T-cell (primary cell): ENCODE measurements at regions of chr5 and their contacts with region 1.

Region 1: GRCh38 chr5:78190402-78190801 is 104.1 kb downstream of the AP3B1 start:
- DNase-seq: no peak
- ATAC-seq: no peak
- H3K4me3 ChIP-seq: no peak overlapping the region
- H3K4me3 Mint-ChIP-seq: no peak overlapping the region
- H3K27ac ChIP-seq: no peak overlapping the region
- H3K27ac Mint-ChIP-seq: no peak overlapping the region
- H3K4me1 ChIP-seq: no peaks in the 10 kb centered on the region
- H3K4me1 Mint-ChIP-seq: peaks cover 8 to 12% (median 8%) of the 10 kb centered on the region in 3 donors
- H3K27me3 ChIP-seq: no peaks in the 10 kb centered on the region
- H3K27me3 Mint-ChIP-seq: no peaks in the 10 kb centered on the region

Region 2: DNA sequence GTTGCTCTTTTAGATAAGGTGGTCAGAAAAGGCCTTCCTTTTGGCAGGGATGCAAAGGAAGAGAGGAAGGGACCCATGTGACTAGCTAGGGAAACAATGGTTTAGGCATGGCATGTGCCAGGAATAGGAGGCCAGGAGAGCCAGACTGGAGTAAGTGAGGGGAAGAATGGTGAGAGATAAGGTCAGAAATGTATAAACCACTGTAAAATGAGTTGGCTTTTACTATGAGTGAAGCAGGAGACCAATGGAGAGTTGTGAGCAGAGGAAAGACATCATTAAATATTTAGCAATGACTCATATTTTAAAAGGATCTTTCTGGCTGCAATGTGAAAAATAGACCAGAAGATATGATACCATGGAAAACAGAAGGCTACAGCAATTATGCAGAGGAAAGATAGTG is 53.2 kb after region 1 on chr5:
- CTCF ChIA-PET with region 1: no interaction called
- POLR2A ChIA-PET with region 1: interaction called in 1 of 2 experiments, 15 read pairs
- DNase-seq: no peak
- ATAC-seq: no peak
- H3K4me3 ChIP-seq: no peak overlapping the region
- H3K4me3 Mint-ChIP-seq: no peak overlapping the region
- H3K27ac ChIP-seq: no peak overlapping the region
- H3K27ac Mint-ChIP-seq: no peak overlapping the region
- H3K4me1 ChIP-seq: no peaks in the 10 kb centered on the region
- H3K4me1 Mint-ChIP-seq: peaks cover 15 to 30% (median 21%) of the 10 kb centered on the region in 3 donors
- H3K27me3 ChIP-seq: no peaks in the 10 kb centered on the region
- H3K27me3 Mint-ChIP-seq: no peaks in the 10 kb centered on the region